ENCODE measurements at regions of chr3 and their contacts with region 1.

Region 1: GRCh38 chr3:177554895-177555759 is 357.8 kb upstream of the TBL1XR1 start:
- DNase-seq: peak in 2 of 9 experiments; percentile 8 to 23
- ATAC-seq: no peak
- H3K4me3 ChIP-seq: no peak overlapping the region
- H3K4me3 Mint-ChIP-seq: no peak overlapping the region
- H3K27ac ChIP-seq: peak overlapping the region in 1 of 2 experiments; percentile 32
- H3K27ac Mint-ChIP-seq: peak overlapping the region; percentile 62
- H3K4me1 ChIP-seq: peaks cover 26% of the 10 kb centered on the region
- H3K4me1 Mint-ChIP-seq: peaks cover 65% of the 10 kb centered on the region
- H3K27me3 ChIP-seq: no peaks in the 10 kb centered on the region
- H3K27me3 Mint-ChIP-seq: no peaks in the 10 kb centered on the region
- CTCF ChIP-seq: no peak

Region 2: GRCh38 chr3:177574251-177574743 is 19.2 kb after region 1 on chr3:
- CTCF ChIA-PET with region 1: no interaction called
- POLR2A ChIA-PET with region 1: no interaction called
- intact Hi-C with region 1: no loop called
- DNase-seq: no peak
- ATAC-seq: no peak
- H3K4me3 ChIP-seq: no peak overlapping the region
- H3K4me3 Mint-ChIP-seq: no peak overlapping the region
- H3K27ac ChIP-seq: no peak overlapping the region
- H3K27ac Mint-ChIP-seq: no peak overlapping the region
- H3K4me1 ChIP-seq: no peaks in the 10 kb centered on the region
- H3K4me1 Mint-ChIP-seq: no peaks in the 10 kb centered on the region
- H3K27me3 ChIP-seq: no peaks in the 10 kb centered on the region
- H3K27me3 Mint-ChIP-seq: no peaks in the 10 kb centered on the region
- CTCF ChIP-seq: no peak

Region 3: DNA sequence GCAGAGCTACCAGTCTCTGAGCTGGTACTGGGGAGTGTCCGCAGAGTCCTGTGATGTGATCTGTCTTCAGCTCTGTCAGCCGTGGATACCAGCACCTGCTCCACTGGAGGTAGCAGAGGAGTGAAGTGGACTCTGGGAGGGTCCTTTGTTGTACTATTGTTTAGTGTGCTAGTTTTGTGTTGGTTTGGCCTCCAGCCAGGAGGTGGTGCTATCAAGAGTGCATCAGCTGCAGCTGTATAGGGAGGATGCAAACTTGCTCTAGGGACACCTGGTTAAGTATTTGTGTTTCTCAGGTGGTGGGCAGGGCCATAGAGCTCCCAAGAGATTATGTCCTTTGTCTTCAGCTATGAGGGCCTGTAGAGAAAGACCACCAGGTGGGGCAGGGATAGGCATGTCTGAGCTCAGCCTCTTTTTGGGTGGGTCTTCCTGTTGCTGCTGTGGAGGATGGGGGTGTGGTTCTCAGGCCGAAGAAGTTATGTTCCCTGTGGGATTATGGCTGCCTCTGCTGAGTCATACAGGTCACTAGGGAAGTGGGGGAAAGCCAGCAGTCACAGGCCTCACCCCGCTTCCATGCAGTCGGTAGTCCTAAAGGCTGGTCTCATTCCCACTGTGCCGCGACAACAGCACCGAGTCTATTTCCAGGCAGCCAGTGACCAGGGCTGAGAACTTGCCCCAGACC is 85.3 kb after region 1 on chr3:
- CTCF ChIA-PET with region 1: no interaction called
- POLR2A ChIA-PET with region 1: no interaction called
- intact Hi-C with region 1: loop called in 1 of 2 experiments (anchors 5 kb)
- DNase-seq: peak in 2 of 9 experiments; percentile 20 to 22
- ATAC-seq: no peak
- H3K4me3 ChIP-seq: no peak overlapping the region
- H3K4me3 Mint-ChIP-seq: no peak overlapping the region
- H3K27ac ChIP-seq: peak overlapping the region in 1 of 2 experiments; percentile 29
- H3K27ac Mint-ChIP-seq: peak overlapping the region; percentile 69
- H3K4me1 ChIP-seq: peaks cover 40% of the 10 kb centered on the region
- H3K4me1 Mint-ChIP-seq: peaks cover 51% of the 10 kb centered on the region
- H3K27me3 ChIP-seq: no peaks in the 10 kb centered on the region
- H3K27me3 Mint-ChIP-seq: no peaks in the 10 kb centered on the region
- CTCF ChIP-seq: no peak

Measured in CD8-positive, alpha-beta T cell (primary cell).